ENCODE measurements at regions of chr6 and their contacts with region 1.

Region 1: GRCh38 chr6:109382576-109383437 is 540 bp upstream of the CD164 start:
- DNase-seq: peak; percentile 92
- CTCF ChIP-seq: peak; percentile 38

Region 2: GRCh38 chr6:109095027-109095834 is 287.6 kb before region 1 on chr6 and contains the start of gene CEP57L1:
- in situ Hi-C with region 1: loop called (anchors 10 kb)
- DNase-seq: peak; percentile 86
- CTCF ChIP-seq: peak; percentile 30

Region 3: GRCh38 chr6:109187399-109188114 is 195.2 kb before region 1 on chr6:
- in situ Hi-C with region 1: loop called (anchors 10 kb)
- DNase-seq: peak; percentile 37
- CTCF ChIP-seq: peak; percentile 65

Measured in GM13976 (cell line).